Mammary epithelial cell (primary cell): ENCODE measurements at regions of chr11 and their contacts with region 1.

Region 1: DNA sequence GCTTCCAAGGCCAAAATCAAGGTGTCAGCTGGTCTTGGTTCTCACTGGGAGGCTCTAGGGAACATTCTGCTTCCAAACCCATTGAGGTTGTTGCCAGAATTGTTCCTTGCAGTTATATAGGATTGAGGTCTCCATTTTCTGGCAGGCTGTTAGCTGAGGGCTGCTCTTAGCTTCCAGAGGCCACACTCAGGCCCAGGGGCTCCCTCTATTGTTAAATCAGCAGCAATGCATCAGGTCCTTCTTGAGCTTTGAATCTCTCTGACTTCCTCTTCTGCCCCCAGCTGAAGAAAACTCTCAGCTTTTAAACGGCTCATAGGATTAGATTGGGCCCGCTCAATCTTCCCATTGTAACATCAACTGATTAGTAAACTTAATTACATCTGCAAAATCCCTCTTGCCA is 39.3 kb upstream of the BSX start:
- DNase-seq: peak; percentile 20
- H3K4me3 ChIP-seq: no peak overlapping the region
- H3K27ac ChIP-seq: no peak overlapping the region
- H3K4me1 ChIP-seq: no peaks in the 10 kb centered on the region
- H3K27me3 ChIP-seq: no peaks in the 10 kb centered on the region
- CTCF ChIP-seq: peak; percentile 60 to 76

Region 2: GRCh38 chr11:122601141-122602125 is 419.5 kb before region 1 on chr11:
- CTCF ChIA-PET with region 1: no interaction called
- dilution Hi-C with region 1: no loop called
- in situ Hi-C with region 1: loop called in 1 of 2 experiments (anchors 25 kb)
- intact Hi-C with region 1: no loop called
- DNase-seq: peak; percentile 41
- H3K4me3 ChIP-seq: no peak overlapping the region
- H3K27ac ChIP-seq: no peak overlapping the region
- H3K4me1 ChIP-seq: no peaks in the 10 kb centered on the region
- H3K27me3 ChIP-seq: peaks cover 3% of the 10 kb centered on the region
- CTCF ChIP-seq: no peak

Region 3: GRCh38 chr11:122796128-122796717 is 224.7 kb before region 1 on chr11:
- CTCF ChIA-PET with region 1: no interaction called
- dilution Hi-C with region 1: no loop called
- in situ Hi-C with region 1: loop called in 1 of 2 experiments (anchors 10 kb)
- intact Hi-C with region 1: loop called (anchors 1 kb)
- DNase-seq: no peak
- H3K4me3 ChIP-seq: no peak overlapping the region
- H3K27ac ChIP-seq: no peak overlapping the region
- H3K4me1 ChIP-seq: peaks cover 5% of the 10 kb centered on the region
- H3K27me3 ChIP-seq: no peaks in the 10 kb centered on the region
- CTCF ChIP-seq: peak; percentile 94 to 99

Region 4: GRCh38 chr11:122874991-122875390 is 146.0 kb before region 1 on chr11:
- CTCF ChIA-PET with region 1: interaction called, 8 read pairs
- dilution Hi-C with region 1: no loop called
- in situ Hi-C with region 1: loop called in 1 of 2 experiments (anchors 5 kb)
- intact Hi-C with region 1: no loop called
- DNase-seq: no peak
- H3K4me3 ChIP-seq: no peak overlapping the region
- H3K27ac ChIP-seq: no peak overlapping the region
- H3K4me1 ChIP-seq: no peaks in the 10 kb centered on the region
- H3K27me3 ChIP-seq: no peaks in the 10 kb centered on the region
- CTCF ChIP-seq: no peak

Region 5: DNA sequence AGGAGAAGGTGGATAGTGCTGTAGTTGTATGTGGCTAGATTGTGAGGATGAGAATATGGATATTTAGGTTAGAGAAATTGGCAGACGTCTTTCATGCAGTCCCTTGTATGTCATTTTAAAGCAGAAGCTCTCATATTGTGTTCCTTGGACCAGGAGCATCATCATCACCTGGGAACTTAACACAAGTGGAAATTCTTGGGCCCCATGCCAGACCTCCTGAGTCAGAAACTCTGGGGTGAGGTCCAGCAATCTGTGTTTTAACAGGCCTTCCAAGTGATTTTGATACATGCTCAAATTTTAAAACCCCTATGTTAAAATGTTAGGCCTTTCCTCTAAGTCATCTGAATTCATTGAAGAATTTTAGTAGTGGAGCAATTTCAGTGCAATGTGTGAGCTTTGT is 103.7 kb before region 1 on chr11:
- CTCF ChIA-PET with region 1: no interaction called
- dilution Hi-C with region 1: no loop called
- in situ Hi-C with region 1: no loop called
- intact Hi-C with region 1: no loop called
- DNase-seq: peak; percentile 76
- H3K4me3 ChIP-seq: no peak overlapping the region
- H3K27ac ChIP-seq: no peak overlapping the region
- H3K4me1 ChIP-seq: peaks cover 3% of the 10 kb centered on the region
- H3K27me3 ChIP-seq: no peaks in the 10 kb centered on the region
- CTCF ChIP-seq: no peak

Region 6: GRCh38 chr11:122998727-122999366 is 22.1 kb before region 1 on chr11:
- CTCF ChIA-PET with region 1: no interaction called
- dilution Hi-C with region 1: no loop called
- in situ Hi-C with region 1: no loop called
- intact Hi-C with region 1: no loop called
- DNase-seq: no peak
- H3K4me3 ChIP-seq: no peak overlapping the region
- H3K27ac ChIP-seq: no peak overlapping the region
- H3K4me1 ChIP-seq: no peaks in the 10 kb centered on the region
- H3K27me3 ChIP-seq: no peaks in the 10 kb centered on the region
- CTCF ChIP-seq: no peak

Region 7: GRCh38 chr11:123344790-123345357 is 323.9 kb after region 1 on chr11:
- CTCF ChIA-PET with region 1: interaction called, 16 read pairs
- dilution Hi-C with region 1: no loop called
- in situ Hi-C with region 1: no loop called
- intact Hi-C with region 1: no loop called
- DNase-seq: no peak
- H3K4me3 ChIP-seq: no peak overlapping the region
- H3K27ac ChIP-seq: no peak overlapping the region
- H3K4me1 ChIP-seq: no peaks in the 10 kb centered on the region
- H3K27me3 ChIP-seq: no peaks in the 10 kb centered on the region
- CTCF ChIP-seq: no peak